ENCODE measurements at regions of chr1 and their contacts with region 1.

Region 1: GRCh38 chr1:207397525-207397926 is 56.6 kb upstream of the CR2 start:
- DNase-seq: no peak
- ATAC-seq: no peak
- H3K4me3 ChIP-seq: no peak overlapping the region
- H3K27ac ChIP-seq: no peak overlapping the region
- H3K4me1 ChIP-seq: no peaks in the 10 kb centered on the region
- H3K27me3 ChIP-seq: no peaks in the 10 kb centered on the region
- CTCF ChIP-seq: no peak

Region 2: GRCh38 chr1:207032528-207033017 is 365.0 kb before region 1 on chr1 and contains the start of gene C1orf116:
- intact Hi-C with region 1: no loop called
- DNase-seq: no peak
- ATAC-seq: peak in 4 of 8 donors; percentile 20 to 71 (median 48)
- H3K4me3 ChIP-seq: no peak within 1 kb of the TSS
- H3K27ac ChIP-seq: no peak within 1 kb of the TSS
- H3K4me1 ChIP-seq: peaks cover 0 to 19% (median 0%) of the 10 kb centered on the region in 9 donors
- H3K27me3 ChIP-seq: peaks cover 0 to 20% (median 5%) of the 10 kb centered on the region in 7 donors
- CTCF ChIP-seq: no peak
- total RNA-seq, gene C1orf116: 0.36 to 1.5 (median 0.65) TPM

Region 3: GRCh38 chr1:207352554-207352953 is 45.0 kb before region 1 on chr1:
- intact Hi-C with region 1: loop called in 1 of 10 experiments (anchors 2 kb)
- DNase-seq: no peak
- ATAC-seq: no peak
- H3K4me3 ChIP-seq: no peak overlapping the region
- H3K27ac ChIP-seq: no peak overlapping the region
- H3K4me1 ChIP-seq: peaks cover 0 to 11% (median 0%) of the 10 kb centered on the region in 9 donors
- H3K27me3 ChIP-seq: no peaks in the 10 kb centered on the region
- CTCF ChIP-seq: no peak

Measured in heart right ventricle (tissue), 16 donors.